HCT116 (cell line): ENCODE measurements at regions of chr12 and their contacts with region 1.

Region 1: DNA sequence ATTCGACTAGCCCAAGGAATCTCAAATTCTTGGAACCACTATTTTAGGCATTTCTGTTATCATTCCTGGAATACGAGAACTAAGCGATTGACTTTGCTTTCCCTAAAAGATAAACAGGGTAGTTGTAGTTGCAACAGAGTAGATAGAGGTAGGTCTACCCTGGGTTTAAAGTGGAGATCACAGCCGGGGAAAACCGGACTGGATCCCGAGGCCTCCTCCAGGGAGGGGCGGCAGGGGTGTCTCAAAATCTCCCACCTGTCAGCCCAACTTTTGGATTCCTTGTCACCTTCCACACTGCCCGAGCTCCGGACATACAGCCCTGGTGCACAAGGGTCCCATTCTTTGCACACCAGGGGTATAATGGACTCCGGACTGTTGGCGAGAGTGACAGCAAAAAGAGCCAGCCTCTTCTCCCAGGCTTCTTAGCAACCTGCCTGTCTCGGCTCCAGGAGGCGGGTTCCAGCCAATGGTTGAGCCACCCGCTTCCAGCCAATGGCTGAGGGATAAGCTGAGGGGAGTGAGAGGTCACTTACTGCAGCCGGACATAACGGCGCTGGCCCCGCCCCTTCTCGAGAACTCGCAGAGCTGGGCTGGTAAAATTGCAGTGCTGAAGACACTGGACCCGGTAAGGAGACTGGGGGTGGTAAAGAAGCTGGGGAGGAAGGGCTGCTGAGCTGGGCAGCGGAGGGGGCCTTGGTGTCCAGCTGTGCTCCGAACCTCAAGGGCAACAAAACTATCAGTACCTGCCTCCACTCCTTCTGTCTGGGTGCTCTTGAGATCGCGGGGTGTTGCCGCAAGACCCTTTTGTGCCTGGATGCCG is at the start of gene SUOX:
- DNase-seq: peak; percentile 93
- ATAC-seq: peak; percentile 99
- H3K4me3 ChIP-seq: peak within 1 kb of the TSS; percentile 62 to 76
- H3K27ac ChIP-seq: peak within 1 kb of the TSS; percentile 63
- H3K4me1 ChIP-seq: peaks cover 8 to 15% of the 10 kb centered on the region in 2 experiments; a peak in 3 of 4 replicates
- H3K27me3 ChIP-seq: no peaks in the 10 kb centered on the region
- CTCF ChIP-seq: no peak
- POLR2A ChIP-seq: peak; percentile 55
- RAD21 ChIP-seq: no peak
- total RNA-seq, gene SUOX: 18.0 TPM

Region 2: DNA sequence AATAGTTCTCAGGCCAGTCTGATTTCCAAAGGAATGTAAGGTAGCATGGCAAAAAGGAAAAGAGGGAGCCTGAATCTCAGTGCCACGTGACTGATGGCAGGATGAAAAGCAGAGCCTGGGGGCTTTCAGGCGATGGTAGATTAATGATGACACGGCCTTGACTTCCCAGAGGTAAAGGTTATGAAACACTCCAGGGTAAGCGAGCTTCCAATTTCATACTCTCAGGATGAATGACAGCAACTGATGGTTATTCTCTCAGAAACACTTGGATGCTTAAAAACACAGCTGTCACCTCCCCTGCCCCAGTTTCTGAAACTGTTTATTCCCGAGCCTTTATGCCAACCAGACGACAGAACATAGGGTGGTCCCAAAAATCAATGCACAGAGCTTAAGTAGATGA is 225.2 kb before region 1 on chr12:
- CTCF ChIA-PET with region 1: no interaction called
- POLR2A ChIA-PET with region 1: no interaction called
- RAD21 ChIA-PET with region 1: no interaction called
- intact Hi-C with region 1: no loop called
- DNase-seq: no peak
- ATAC-seq: no peak
- H3K4me3 ChIP-seq: no peak overlapping the region
- H3K27ac ChIP-seq: no peak overlapping the region
- H3K4me1 ChIP-seq: no peaks in the 10 kb centered on the region
- H3K27me3 ChIP-seq: no peaks in the 10 kb centered on the region
- CTCF ChIP-seq: no peak
- POLR2A ChIP-seq: no peak
- RAD21 ChIP-seq: no peak

Region 3: DNA sequence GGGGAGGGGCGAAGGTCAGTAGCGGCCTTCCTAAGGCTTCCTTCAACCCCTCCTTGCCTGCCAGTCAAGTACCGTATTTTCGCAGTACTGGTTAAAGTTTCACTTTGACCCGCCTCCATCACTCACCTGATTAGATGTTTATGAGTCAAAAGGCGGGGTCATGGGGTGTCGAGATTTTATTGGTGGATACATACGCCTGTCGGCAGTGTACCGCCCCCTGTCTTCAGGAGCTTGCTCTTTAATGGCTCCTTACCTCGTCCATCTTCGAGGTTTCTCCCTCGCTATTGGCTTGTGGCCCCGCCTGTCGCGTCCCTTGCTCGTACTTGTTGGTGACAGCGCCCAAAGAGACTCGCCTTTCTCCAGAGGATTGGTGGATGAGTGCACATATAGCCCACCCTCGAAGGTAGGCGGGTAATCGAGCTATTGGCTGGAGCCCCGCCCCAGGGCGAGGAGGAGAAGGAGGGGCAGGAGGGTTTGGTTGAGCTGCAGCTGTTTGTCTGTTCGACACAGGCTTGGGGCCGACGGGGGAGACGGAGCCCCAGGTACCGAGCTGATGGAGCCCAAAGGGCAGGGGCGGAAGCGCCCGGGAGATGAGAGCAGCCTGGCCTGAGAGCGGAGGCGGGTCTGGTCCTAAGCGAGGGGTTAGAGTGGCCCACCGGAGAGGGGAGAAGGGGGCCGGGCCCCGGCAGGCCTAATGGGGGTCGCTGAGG is 23.2 kb before region 1 on chr12 and contains the start of gene RAB5B:
- CTCF ChIA-PET with region 1: interaction called, 35 read pairs
- POLR2A ChIA-PET with region 1: interaction called, 6 read pairs
- RAD21 ChIA-PET with region 1: interaction called in 1 of 2 experiments, 6 read pairs
- intact Hi-C with region 1: no loop called
- DNase-seq: peak; percentile 100
- ATAC-seq: peak; percentile 94
- H3K4me3 ChIP-seq: peak within 1 kb of the TSS; percentile 78 to 94
- H3K27ac ChIP-seq: peak within 1 kb of the TSS; percentile 80
- H3K4me1 ChIP-seq: peaks cover 17 to 32% of the 10 kb centered on the region in 2 experiments
- H3K27me3 ChIP-seq: no peaks in the 10 kb centered on the region
- CTCF ChIP-seq: no peak
- POLR2A ChIP-seq: peak; percentile 61
- RAD21 ChIP-seq: no peak
- total RNA-seq, gene RAB5B: 44.5 TPM

Region 4: DNA sequence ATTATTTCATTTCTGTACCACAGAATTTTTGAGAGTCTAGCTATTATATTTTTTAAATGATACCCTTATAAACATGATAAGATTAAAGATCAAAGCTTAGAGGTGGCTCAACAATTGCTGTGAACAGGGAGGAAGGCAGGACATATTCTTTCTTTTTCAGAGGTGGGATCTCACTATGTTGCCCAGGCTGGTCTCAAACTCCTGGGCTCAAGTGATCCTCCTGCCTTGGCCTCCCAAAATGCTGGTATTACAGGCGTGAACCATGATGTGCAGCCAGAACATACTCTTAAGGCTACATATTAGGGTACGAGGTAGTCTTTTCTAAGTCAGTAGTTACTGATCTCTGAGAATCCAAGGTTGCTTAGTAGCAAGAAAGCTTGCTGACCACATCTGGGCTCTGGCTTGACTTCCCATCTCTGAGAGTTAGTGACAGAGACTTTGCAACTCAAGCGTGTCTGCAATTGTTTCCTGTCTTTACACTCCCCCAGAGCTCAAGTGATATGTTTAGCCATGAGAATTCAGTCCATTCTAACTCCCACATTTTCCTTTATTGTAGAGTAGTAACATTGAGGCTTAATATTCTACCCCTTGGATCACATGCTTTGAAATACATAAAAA is 14.5 kb before region 1 on chr12:
- CTCF ChIA-PET with region 1: interaction called, 17 read pairs
- POLR2A ChIA-PET with region 1: no interaction called
- RAD21 ChIA-PET with region 1: no interaction called
- intact Hi-C with region 1: no loop called
- DNase-seq: no peak
- ATAC-seq: no peak
- H3K4me3 ChIP-seq: no peak overlapping the region
- H3K27ac ChIP-seq: no peak overlapping the region
- H3K4me1 ChIP-seq: peaks cover 12 to 16% of the 10 kb centered on the region in 2 experiments
- H3K27me3 ChIP-seq: no peaks in the 10 kb centered on the region
- CTCF ChIP-seq: no peak
- POLR2A ChIP-seq: no peak
- RAD21 ChIP-seq: no peak

Region 5: GRCh38 chr12:56007564-56008559 is 10.9 kb after region 1 on chr12:
- CTCF ChIA-PET with region 1: interaction called, 48 read pairs
- POLR2A ChIA-PET with region 1: interaction called, 22 read pairs
- RAD21 ChIA-PET with region 1: interaction called in 1 of 2 experiments, 7 read pairs
- intact Hi-C with region 1: no loop called
- DNase-seq: no peak
- ATAC-seq: peak; percentile 84
- H3K4me3 ChIP-seq: peak overlapping the region; percentile 65 to 97
- H3K27ac ChIP-seq: peak overlapping the region; percentile 39
- H3K4me1 ChIP-seq: peaks cover 10 to 21% of the 10 kb centered on the region in 2 experiments
- H3K27me3 ChIP-seq: no peaks in the 10 kb centered on the region
- CTCF ChIP-seq: no peak
- POLR2A ChIP-seq: no peak
- RAD21 ChIP-seq: no peak

Region 6: GRCh38 chr12:56029666-56030293 is 32.9 kb after region 1 on chr12:
- CTCF ChIA-PET with region 1: interaction called, 24 read pairs
- POLR2A ChIA-PET with region 1: interaction called, 3 read pairs
- RAD21 ChIA-PET with region 1: interaction called, 3 to 4 read pairs
- intact Hi-C with region 1: loop called (anchors 1 kb)
- DNase-seq: no peak
- ATAC-seq: peak; percentile 88
- H3K4me3 ChIP-seq: no peak overlapping the region
- H3K27ac ChIP-seq: no peak overlapping the region
- H3K4me1 ChIP-seq: no peaks in the 10 kb centered on the region
- H3K27me3 ChIP-seq: no peaks in the 10 kb centered on the region
- CTCF ChIP-seq: peak; percentile 73 to 78 (median 78)
- POLR2A ChIP-seq: no peak
- RAD21 ChIP-seq: peak; percentile 73

Region 7: DNA sequence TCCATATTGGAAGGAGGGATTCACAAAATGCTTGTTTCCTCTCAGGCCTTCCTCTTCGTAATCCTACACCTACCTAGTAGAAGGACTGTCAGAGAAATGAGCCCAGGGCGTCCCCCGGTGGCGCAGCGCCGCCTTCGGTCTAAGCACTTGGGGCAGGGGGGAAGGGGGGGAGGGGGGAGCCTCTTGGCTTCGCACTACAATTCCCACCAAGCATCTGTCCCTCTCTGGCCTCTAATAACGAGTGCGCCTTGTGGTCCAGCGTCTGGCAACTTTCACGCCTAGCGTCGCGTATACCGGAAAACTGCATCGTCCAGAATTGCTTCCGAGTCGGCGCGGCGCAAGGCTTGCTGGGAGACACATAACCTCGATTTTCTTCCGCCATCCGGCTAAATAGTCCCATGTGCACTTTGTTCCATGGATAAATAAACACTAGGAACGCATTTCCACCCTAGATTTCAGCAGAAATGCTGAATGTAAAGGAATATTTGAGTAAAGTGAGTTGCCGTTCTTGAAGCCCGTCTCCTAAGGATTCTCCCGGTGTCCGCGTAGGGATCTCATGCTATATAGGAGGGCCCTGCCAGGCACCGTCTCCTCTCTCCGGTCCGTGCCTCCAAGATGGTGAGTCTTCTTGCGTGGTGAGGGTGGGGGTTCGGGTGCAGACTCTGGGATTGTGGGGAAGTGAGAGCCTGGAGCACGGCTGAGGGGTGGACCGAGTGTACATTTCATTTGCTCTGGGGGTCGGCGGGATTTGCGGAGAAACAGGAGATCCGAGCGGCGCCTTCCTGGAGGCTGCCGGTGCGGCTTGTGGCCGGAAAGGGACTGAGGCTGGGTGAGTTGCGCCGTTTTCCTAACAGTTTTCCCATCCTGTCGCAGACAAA is 44.9 kb after region 1 on chr12 and contains the start of gene RPS26:
- CTCF ChIA-PET with region 1: interaction called, 13 read pairs
- POLR2A ChIA-PET with region 1: interaction called, 4 read pairs
- RAD21 ChIA-PET with region 1: interaction called in 1 of 2 experiments, 3 read pairs
- intact Hi-C with region 1: loop called (anchors 1 kb)
- DNase-seq: peak; percentile 100
- ATAC-seq: peak; percentile 88
- H3K4me3 ChIP-seq: peak within 1 kb of the TSS; percentile 90 to 99
- H3K27ac ChIP-seq: peak within 1 kb of the TSS; percentile 90
- H3K4me1 ChIP-seq: peaks cover 16 to 39% of the 10 kb centered on the region in 2 experiments
- H3K27me3 ChIP-seq: no peaks in the 10 kb centered on the region
- CTCF ChIP-seq: peak; percentile 39 to 75 (median 42)
- POLR2A ChIP-seq: peak; percentile 99
- RAD21 ChIP-seq: peak; percentile 81
- total RNA-seq, gene RPS26: 70.2 TPM

Region 8: DNA sequence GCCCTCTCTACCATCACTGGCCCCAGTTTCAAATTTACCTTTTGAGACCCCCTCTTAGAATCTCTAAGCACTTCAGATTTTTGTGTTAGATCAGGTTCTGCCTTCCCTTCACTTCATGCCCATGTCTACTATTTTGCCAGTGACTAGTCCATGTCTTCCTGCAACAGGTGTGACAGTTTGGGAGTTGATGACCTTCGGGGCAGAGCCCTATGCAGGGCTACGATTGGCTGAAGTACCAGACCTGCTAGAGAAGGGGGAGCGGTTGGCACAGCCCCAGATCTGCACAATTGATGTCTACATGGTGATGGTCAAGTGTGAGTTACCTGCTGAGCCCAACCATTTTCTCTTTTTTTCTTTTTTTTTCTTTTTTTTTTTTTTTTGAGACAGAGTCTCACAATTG is 101.7 kb after region 1 on chr12:
- CTCF ChIA-PET with region 1: no interaction called
- POLR2A ChIA-PET with region 1: no interaction called
- RAD21 ChIA-PET with region 1: no interaction called
- intact Hi-C with region 1: no loop called
- DNase-seq: no peak
- ATAC-seq: no peak
- H3K4me3 ChIP-seq: no peak overlapping the region
- H3K27ac ChIP-seq: no peak overlapping the region
- H3K4me1 ChIP-seq: peaks cover 4 to 7% of the 10 kb centered on the region in 2 experiments
- H3K27me3 ChIP-seq: no peaks in the 10 kb centered on the region
- CTCF ChIP-seq: no peak
- POLR2A ChIP-seq: no peak
- RAD21 ChIP-seq: no peak